K562 (cell line): ENCODE measurements at regions of chr9 and their contacts with region 1.

Region 1: GRCh38 chr9:132800038-132800648 is 77.9 kb downstream of the AK8 start:
- DNase-seq: peak; percentile 56 to 71 (median 66)
- ATAC-seq: peak; percentile 70
- H3K4me3 ChIP-seq: no peak overlapping the region
- H3K27ac ChIP-seq: no peak overlapping the region
- H3K4me1 ChIP-seq: peaks cover 15 to 29% of the 10 kb centered on the region in 2 experiments
- H3K27me3 ChIP-seq: peaks cover 9 to 34% of the 10 kb centered on the region in 2 experiments; a peak in 4 of 5 replicates
- CTCF ChIP-seq: peak; percentile 88 to 89 (median 88)
- EP300 ChIP-seq: no peak
- POLR2A ChIP-seq: no peak
- RAD21 ChIP-seq: peak; percentile 87 to 93

Region 2: DNA sequence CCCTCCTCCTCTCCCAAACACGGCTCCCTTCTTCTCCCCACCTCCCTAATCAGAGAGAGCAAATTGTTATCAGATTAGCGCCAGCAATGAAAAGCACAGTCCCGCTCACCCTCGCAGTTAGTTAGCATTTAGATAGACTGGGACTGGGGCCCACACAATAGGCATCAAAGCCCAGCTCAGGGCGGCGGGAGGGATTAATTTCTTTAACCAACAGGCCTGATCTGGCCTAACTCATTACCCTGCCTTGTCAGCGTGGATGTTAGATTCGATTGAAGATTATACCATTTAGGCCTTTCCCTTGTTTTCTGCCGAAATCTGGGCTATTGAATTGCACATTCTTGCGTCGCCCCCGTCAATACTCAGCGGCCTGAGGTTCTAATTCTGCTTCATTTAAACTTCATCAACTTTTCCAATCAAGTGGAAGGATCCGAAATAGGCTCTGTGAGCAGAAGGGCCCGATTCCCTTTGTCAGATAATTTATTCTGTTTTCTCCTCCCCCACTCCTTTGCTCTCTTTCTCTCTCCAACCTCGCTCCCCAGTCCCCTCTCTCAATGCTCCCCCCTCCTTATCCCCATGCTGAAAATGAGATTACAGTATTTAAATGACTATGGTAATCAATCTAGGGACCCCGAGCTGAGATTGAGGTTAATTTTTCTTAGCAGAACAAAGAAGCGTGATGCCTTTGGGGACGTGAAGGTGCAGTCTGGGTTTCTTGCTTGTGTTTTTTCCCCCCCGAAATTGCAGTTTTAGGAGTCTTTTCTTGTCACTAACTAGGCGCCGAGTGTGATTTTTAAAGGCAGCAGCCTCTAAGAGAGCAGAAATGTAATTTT is 375.1 kb before region 1 on chr9:
- CTCF ChIA-PET with region 1: no interaction called
- POLR2A ChIA-PET with region 1: no interaction called
- in situ Hi-C with region 1: loop called (anchors 5 kb)
- intact Hi-C with region 1: no loop called
- DNase-seq: no peak
- ATAC-seq: no peak
- H3K4me3 ChIP-seq: no peak overlapping the region
- H3K27ac ChIP-seq: no peak overlapping the region
- H3K4me1 ChIP-seq: no peaks in the 10 kb centered on the region
- H3K27me3 ChIP-seq: peaks cover 59 to 70% of the 10 kb centered on the region in 2 experiments
- CTCF ChIP-seq: no peak
- EP300 ChIP-seq: no peak
- POLR2A ChIP-seq: no peak
- RAD21 ChIP-seq: no peak

Region 3: GRCh38 chr9:132575005-132575609 is 225.0 kb before region 1 on chr9:
- CTCF ChIA-PET with region 1: no interaction called
- POLR2A ChIA-PET with region 1: no interaction called
- in situ Hi-C with region 1: no loop called
- intact Hi-C with region 1: loop called (anchors 5 kb)
- DNase-seq: peak; percentile 74 to 85 (median 81)
- ATAC-seq: peak; percentile 97
- H3K4me3 ChIP-seq: no peak overlapping the region
- H3K27ac ChIP-seq: no peak overlapping the region
- H3K4me1 ChIP-seq: no peaks in the 10 kb centered on the region; a peak in 1 of 5 replicates
- H3K27me3 ChIP-seq: peaks cover 4 to 62% of the 10 kb centered on the region in 2 experiments; a peak in 3 of 5 replicates
- CTCF ChIP-seq: peak; percentile 85 to 86 (median 86)
- EP300 ChIP-seq: no peak
- POLR2A ChIP-seq: no peak
- RAD21 ChIP-seq: peak; percentile 75 to 90

Region 4: GRCh38 chr9:132694157-132694556 is 106.0 kb before region 1 on chr9:
- CTCF ChIA-PET with region 1: interaction called, 8 read pairs
- POLR2A ChIA-PET with region 1: no interaction called
- in situ Hi-C with region 1: no loop called
- intact Hi-C with region 1: loop called (anchors 10 kb)
- DNase-seq: peak in 3 of 4 experiments; percentile 27 to 28 (median 27)
- ATAC-seq: peak; percentile 57
- H3K4me3 ChIP-seq: no peak overlapping the region
- H3K27ac ChIP-seq: no peak overlapping the region
- H3K4me1 ChIP-seq: no peaks in the 10 kb centered on the region
- H3K27me3 ChIP-seq: no peaks in the 10 kb centered on the region
- CTCF ChIP-seq: peak; percentile 5 to 31 (median 21); a peak in 2 of 6 replicates
- EP300 ChIP-seq: no peak
- POLR2A ChIP-seq: no peak
- RAD21 ChIP-seq: peak in 1 of 2 experiments; percentile 39; a peak in 2 of 4 replicates

Region 5: GRCh38 chr9:132901856-132902831 is 102.0 kb after region 1 on chr9:
- CTCF ChIA-PET with region 1: no interaction called
- POLR2A ChIA-PET with region 1: no interaction called
- in situ Hi-C with region 1: no loop called
- intact Hi-C with region 1: loop called (anchors 5 kb)
- DNase-seq: peak; percentile 80 to 91 (median 87)
- ATAC-seq: peak; percentile 99
- H3K4me3 ChIP-seq: no peak overlapping the region
- H3K27ac ChIP-seq: no peak overlapping the region
- H3K4me1 ChIP-seq: no peaks in the 10 kb centered on the region
- H3K27me3 ChIP-seq: no peaks in the 10 kb centered on the region
- CTCF ChIP-seq: peak; percentile 92 to 95 (median 93)
- EP300 ChIP-seq: no peak
- POLR2A ChIP-seq: no peak
- RAD21 ChIP-seq: peak; percentile 37 to 68